ENCODE measurements at regions of chr2 and their contacts with region 1.

Region 1: GRCh38 chr2:189142893-189143759 is 36.4 kb downstream of the COL5A2 start:
- H3K4me3 ChIP-seq: no peak overlapping the region
- H3K27ac ChIP-seq: no peak overlapping the region
- H3K4me1 ChIP-seq: no peaks in the 10 kb centered on the region
- CTCF ChIP-seq: peak; percentile 31; the same call in 1 of the 2 replicates

Region 2: GRCh38 chr2:188919824-188920223 is 223.3 kb before region 1 on chr2:
- CTCF ChIA-PET with region 1: no interaction called
- POLR2A ChIA-PET with region 1: no interaction called
- H3K4me3 ChIP-seq: no peak overlapping the region
- H3K27ac ChIP-seq: no peak overlapping the region
- H3K4me1 ChIP-seq: no peaks in the 10 kb centered on the region
- CTCF ChIP-seq: no peak

Region 3: DNA sequence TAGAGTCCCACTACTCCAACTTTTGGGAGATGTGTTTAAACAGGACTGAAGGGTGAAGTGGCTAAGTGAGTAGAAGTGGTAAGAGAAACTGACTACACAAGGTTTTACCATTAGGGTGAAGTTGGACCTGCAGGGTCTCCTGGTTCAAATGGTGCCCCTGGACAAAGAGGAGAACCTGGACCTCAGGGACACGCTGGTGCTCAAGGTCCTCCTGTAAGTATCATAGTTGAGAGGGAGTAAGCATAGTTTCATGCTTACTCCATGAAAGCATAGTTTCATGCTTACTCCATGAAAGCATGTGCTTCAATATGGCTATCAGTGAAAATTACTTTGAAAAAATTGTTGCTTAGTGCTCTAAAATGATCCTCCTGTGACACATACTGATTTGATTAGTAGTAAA is 149.9 kb before region 1 on chr2:
- CTCF ChIA-PET with region 1: no interaction called
- POLR2A ChIA-PET with region 1: no interaction called
- H3K4me3 ChIP-seq: no peak overlapping the region
- H3K27ac ChIP-seq: no peak overlapping the region
- H3K4me1 ChIP-seq: no peaks in the 10 kb centered on the region
- CTCF ChIP-seq: no peak

Region 4: GRCh38 chr2:189024901-189025618 is 118.1 kb before region 1 on chr2:
- CTCF ChIA-PET with region 1: no interaction called
- POLR2A ChIA-PET with region 1: no interaction called
- H3K4me3 ChIP-seq: no peak overlapping the region
- H3K27ac ChIP-seq: no peak overlapping the region
- H3K4me1 ChIP-seq: no peaks in the 10 kb centered on the region
- CTCF ChIP-seq: no peak

Region 5: GRCh38 chr2:189092936-189093335 is 50.2 kb before region 1 on chr2:
- CTCF ChIA-PET with region 1: interaction called, 14 read pairs
- POLR2A ChIA-PET with region 1: no interaction called
- H3K4me3 ChIP-seq: no peak overlapping the region
- H3K27ac ChIP-seq: no peak overlapping the region
- H3K4me1 ChIP-seq: no peaks in the 10 kb centered on the region
- CTCF ChIP-seq: no peak

Region 6: GRCh38 chr2:189116979-189117378 is 26.1 kb before region 1 on chr2:
- CTCF ChIA-PET with region 1: interaction called, 14 read pairs
- POLR2A ChIA-PET with region 1: no interaction called
- H3K4me3 ChIP-seq: no peak overlapping the region
- H3K27ac ChIP-seq: no peak overlapping the region
- H3K4me1 ChIP-seq: no peaks in the 10 kb centered on the region
- CTCF ChIP-seq: no peak

Region 7: DNA sequence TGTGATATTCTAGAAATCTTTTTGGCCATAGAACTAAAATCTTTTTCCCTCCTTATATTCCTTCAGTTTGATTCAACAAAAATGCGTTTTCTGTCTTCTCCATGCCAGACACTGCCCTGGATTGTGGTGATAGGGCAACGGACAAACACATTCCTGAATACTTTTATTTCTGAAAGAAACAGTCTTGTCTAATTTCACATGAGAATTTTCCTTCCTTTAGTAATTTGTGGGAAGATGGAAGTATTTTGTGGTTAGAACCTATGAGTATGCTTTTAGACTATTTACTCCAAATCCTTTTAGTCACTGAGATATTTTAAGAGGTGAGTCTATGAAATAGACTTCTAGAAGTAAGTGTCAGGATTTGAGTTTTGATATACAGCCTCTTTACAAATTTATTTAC is 13.2 kb before region 1 on chr2:
- CTCF ChIA-PET with region 1: interaction called, 13 read pairs
- POLR2A ChIA-PET with region 1: no interaction called
- H3K4me3 ChIP-seq: no peak overlapping the region
- H3K27ac ChIP-seq: no peak overlapping the region
- H3K4me1 ChIP-seq: peaks cover 12% of the 10 kb centered on the region; the same call in 1 of the 2 replicates
- CTCF ChIP-seq: no peak

Region 8: GRCh38 chr2:189153619-189154018 is 10.5 kb after region 1 on chr2:
- CTCF ChIA-PET with region 1: interaction called, 25 read pairs
- POLR2A ChIA-PET with region 1: no interaction called
- H3K4me3 ChIP-seq: no peak overlapping the region
- H3K27ac ChIP-seq: no peak overlapping the region
- H3K4me1 ChIP-seq: no peaks in the 10 kb centered on the region
- CTCF ChIP-seq: no peak

Region 9: GRCh38 chr2:189287982-189288521 is 144.9 kb after region 1 on chr2:
- CTCF ChIA-PET with region 1: interaction called, 27 read pairs
- POLR2A ChIA-PET with region 1: no interaction called
- H3K4me3 ChIP-seq: no peak overlapping the region
- H3K27ac ChIP-seq: no peak overlapping the region
- H3K4me1 ChIP-seq: no peaks in the 10 kb centered on the region
- CTCF ChIP-seq: peak; percentile 72

Region 10: GRCh38 chr2:189412330-189412953 is 269.3 kb after region 1 on chr2:
- CTCF ChIA-PET with region 1: interaction called, 13 read pairs
- POLR2A ChIA-PET with region 1: no interaction called
- H3K4me3 ChIP-seq: no peak overlapping the region
- H3K27ac ChIP-seq: no peak overlapping the region
- H3K4me1 ChIP-seq: 0 out of 2 replicates have a peak, but pooled peaks cover under 1% of the 10 kb centered on the region
- CTCF ChIP-seq: 0 out of 2 replicates have a peak, but pooled peaks have one; percentile 26

Measured in HEK293 (cell line).